Activated CD8-positive, alpha-beta memory T cell treated with anti-CD3 and anti-CD28 coated beads, Interleukin-2, amount 10 ng/mL, durations not matched to agents 7 days and 5 days (primary cell): ENCODE measurements at regions of chr4 and their contacts with region 1.

Region 1: DNA sequence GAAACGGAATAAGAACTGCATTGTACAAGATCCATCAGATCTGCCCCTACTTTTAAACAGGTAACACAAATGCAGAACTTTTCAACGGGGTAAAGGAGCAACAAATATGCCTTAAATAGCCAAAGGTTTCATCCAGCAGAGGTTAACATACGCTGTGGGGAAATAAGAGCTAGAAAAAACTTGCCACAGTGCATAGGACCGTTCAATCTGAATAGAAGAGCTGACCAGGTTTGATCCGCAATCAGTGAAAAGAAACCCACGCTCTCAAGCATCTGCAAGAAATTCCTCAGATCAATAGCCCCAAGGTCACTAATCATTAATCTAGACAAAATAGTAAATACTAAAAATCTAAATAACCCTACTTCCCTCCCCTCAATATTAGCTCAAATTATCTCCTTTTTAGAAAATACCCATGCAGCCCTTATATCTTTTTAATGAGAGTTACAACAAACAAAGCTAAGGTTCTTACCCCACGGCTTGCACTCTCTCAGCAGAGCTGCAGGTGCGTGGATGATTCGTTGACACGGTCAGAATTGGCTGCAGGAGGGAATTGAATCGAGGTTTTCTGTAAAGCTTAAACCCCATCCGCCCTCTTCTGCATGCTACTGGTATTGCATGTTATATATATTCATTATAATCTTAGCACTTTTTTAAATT is at the start of gene TLR10:
- DNase-seq: peak; percentile 51
- ATAC-seq: peak; percentile 39
- H3K4me3 Mint-ChIP-seq: no peak within 1 kb of the TSS
- H3K27ac Mint-ChIP-seq: no peak within 1 kb of the TSS
- H3K4me1 Mint-ChIP-seq: peaks cover 4% of the 10 kb centered on the region
- H3K27me3 Mint-ChIP-seq: peaks cover 16% of the 10 kb centered on the region
- total RNA-seq, gene TLR10: 0.09 TPM in 1 of 2 experiments, not detected in the other

Region 2: GRCh38 chr4:38387348-38387747 is 395.2 kb before region 1 on chr4:
- CTCF ChIA-PET with region 1: no interaction called
- DNase-seq: no peak
- ATAC-seq: no peak
- H3K4me3 Mint-ChIP-seq: no peak overlapping the region
- H3K27ac Mint-ChIP-seq: no peak overlapping the region
- H3K4me1 Mint-ChIP-seq: no peaks in the 10 kb centered on the region
- H3K27me3 Mint-ChIP-seq: no peaks in the 10 kb centered on the region

Region 3: GRCh38 chr4:38759113-38759789 is 23.3 kb before region 1 on chr4:
- CTCF ChIA-PET with region 1: interaction called, 58 read pairs
- DNase-seq: peak; percentile 71
- ATAC-seq: peak; percentile 69
- H3K4me3 Mint-ChIP-seq: no peak overlapping the region
- H3K27ac Mint-ChIP-seq: no peak overlapping the region
- H3K4me1 Mint-ChIP-seq: peaks cover 5% of the 10 kb centered on the region
- H3K27me3 Mint-ChIP-seq: peaks cover 11% of the 10 kb centered on the region

Region 4: DNA sequence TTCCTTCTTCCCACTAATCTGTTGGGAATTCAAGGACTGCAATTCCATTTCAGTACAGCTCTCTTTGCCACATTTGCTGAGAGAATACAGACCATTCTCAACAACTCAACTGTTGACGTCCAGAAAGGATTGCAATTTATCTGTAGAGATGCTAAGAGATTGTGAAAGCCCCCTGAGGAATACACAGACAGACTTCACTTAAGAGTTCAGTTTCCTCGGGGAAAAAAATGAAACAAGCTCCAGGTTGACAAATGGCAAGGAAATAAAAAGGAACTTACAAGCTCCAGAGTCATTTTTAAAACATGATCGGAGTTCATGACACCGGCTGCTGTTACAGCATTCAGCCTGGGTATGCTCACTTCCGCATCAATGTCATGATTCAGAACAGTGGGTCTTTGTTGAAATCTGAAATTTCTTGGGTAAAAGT is 13.6 kb before region 1 on chr4:
- CTCF ChIA-PET with region 1: interaction called, 22 read pairs
- DNase-seq: no peak
- ATAC-seq: no peak
- H3K4me3 Mint-ChIP-seq: no peak overlapping the region
- H3K27ac Mint-ChIP-seq: no peak overlapping the region
- H3K4me1 Mint-ChIP-seq: no peaks in the 10 kb centered on the region
- H3K27me3 Mint-ChIP-seq: peaks cover 29% of the 10 kb centered on the region

Region 5: DNA sequence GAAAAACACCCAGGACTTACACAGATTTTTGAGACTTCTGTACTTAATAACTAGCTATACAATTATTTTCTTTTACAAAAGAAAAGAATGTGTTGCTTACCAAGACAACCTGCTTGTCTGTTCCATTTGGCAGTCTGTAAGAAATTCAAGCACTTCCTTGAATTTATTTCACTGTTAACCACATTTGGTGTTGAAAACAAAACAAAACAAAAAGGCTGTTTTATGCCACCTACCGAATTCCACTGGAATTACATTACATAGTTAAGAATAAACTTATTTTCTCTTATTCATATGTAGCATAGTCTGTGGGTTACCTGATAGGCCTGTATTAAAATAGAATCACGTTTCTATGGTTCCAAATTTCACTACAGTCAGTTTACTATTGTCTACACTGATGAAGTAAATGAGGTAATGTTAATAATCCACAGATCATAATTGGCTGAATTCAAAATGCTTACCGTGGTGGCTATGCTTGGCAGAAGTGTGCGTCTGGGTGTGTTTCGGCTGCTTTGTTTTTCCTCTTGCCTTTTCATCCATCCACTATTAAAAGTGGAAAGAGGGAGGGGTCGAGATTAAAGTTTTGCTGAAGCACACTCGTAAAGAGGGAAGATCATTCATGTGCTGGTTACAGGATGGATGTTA is 22.2 kb after region 1 on chr4 and contains the start of gene TLR1:
- CTCF ChIA-PET with region 1: interaction called, 20 read pairs
- DNase-seq: no peak
- ATAC-seq: peak; percentile 81
- H3K4me3 Mint-ChIP-seq: peak within 1 kb of the TSS; percentile 74
- H3K27ac Mint-ChIP-seq: peak within 1 kb of the TSS; percentile 88
- H3K4me1 Mint-ChIP-seq: peaks cover 23% of the 10 kb centered on the region
- H3K27me3 Mint-ChIP-seq: no peaks in the 10 kb centered on the region
- total RNA-seq, gene TLR1: 3.2 to 5.3 TPM